Mammary epithelial cell (primary cell): ENCODE measurements at regions of chr10 and their contacts with region 1.

Region 1: DNA sequence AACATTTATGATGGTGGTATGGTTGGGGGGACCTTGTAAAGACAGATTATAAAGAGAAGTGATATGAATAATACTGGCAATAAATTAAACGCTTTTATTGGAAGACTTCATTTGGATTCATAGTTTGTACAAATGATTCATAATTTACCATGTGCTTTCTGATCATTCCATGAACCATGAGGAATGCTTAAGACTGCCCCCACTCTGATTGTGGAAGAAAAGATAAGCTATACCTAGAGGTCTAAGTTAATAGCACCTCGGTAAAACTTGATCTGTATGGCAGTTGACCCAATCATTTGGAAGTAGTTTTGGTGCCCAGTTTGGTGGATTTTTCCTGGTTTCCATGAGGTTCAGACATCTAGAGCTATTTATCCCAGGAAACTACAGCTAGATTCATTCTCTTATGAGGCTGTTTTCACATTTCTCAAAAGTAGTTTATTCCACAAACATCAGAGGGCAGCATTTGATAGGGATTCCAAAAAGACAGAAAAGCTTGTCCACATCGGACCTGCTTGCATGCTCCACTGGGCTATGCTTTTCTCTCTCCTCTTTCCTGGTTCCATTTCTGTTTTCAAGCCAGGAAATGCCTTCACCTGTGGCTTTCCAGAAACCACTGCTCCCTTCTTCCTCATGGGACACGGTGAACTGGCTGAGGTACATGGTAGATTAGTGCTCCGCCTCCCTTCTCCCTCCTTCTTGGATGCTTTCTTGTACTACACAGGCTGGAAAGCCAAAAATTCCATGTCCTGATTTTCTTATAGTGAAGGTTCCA is 29.2 kb downstream of the TFAM start:
- DNase-seq: peak; percentile 64
- H3K4me3 ChIP-seq: no peak overlapping the region
- H3K27ac ChIP-seq: no peak overlapping the region
- H3K4me1 ChIP-seq: peaks cover 10% of the 10 kb centered on the region
- H3K27me3 ChIP-seq: no peaks in the 10 kb centered on the region
- CTCF ChIP-seq: peak; percentile 35 to 62

Region 2: DNA sequence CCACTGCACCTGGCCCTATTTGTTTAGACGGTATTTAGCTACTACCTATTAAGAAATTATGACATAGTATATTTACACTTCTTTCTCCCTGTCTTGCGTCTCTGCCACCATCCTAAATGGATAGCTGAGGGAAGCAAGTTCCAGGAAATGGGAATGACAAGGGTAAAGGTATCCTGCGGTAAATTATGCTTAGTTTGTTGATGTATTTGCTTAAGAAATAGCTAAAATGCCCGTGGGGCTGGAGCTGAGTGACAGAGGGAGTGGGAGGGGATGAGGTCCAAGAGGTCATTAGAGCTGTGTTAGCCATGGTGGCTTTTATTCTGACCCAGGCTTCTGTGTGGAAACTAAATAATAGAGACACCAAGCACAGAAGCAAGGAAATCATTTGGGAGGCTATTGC is 108.6 kb before region 1 on chr10:
- CTCF ChIA-PET with region 1: no interaction called
- dilution Hi-C with region 1: no loop called
- in situ Hi-C with region 1: no loop called
- intact Hi-C with region 1: no loop called
- DNase-seq: no peak
- H3K4me3 ChIP-seq: no peak overlapping the region
- H3K27ac ChIP-seq: no peak overlapping the region
- H3K4me1 ChIP-seq: no peaks in the 10 kb centered on the region
- H3K27me3 ChIP-seq: peaks cover 2% of the 10 kb centered on the region
- CTCF ChIP-seq: no peak

Region 3: GRCh38 chr10:58435297-58435985 is 21.0 kb after region 1 on chr10:
- CTCF ChIA-PET with region 1: interaction called, 11 read pairs
- dilution Hi-C with region 1: no loop called
- in situ Hi-C with region 1: no loop called
- intact Hi-C with region 1: no loop called
- DNase-seq: peak; percentile 91
- H3K4me3 ChIP-seq: no peak overlapping the region
- H3K27ac ChIP-seq: peak overlapping the region; percentile 75
- H3K4me1 ChIP-seq: peaks cover 50% of the 10 kb centered on the region
- H3K27me3 ChIP-seq: no peaks in the 10 kb centered on the region
- CTCF ChIP-seq: peak; percentile 14 to 30

Region 4: GRCh38 chr10:58513188-58514110 is 99.0 kb after region 1 on chr10:
- CTCF ChIA-PET with region 1: interaction called, 3 read pairs
- dilution Hi-C with region 1: no loop called
- in situ Hi-C with region 1: loop called in 1 of 2 experiments (anchors 10 kb)
- intact Hi-C with region 1: loop called (anchors 1 kb)
- DNase-seq: peak; percentile 62
- H3K4me3 ChIP-seq: peak overlapping the region; percentile 84 to 95 (median 90)
- H3K27ac ChIP-seq: peak overlapping the region; percentile 72
- H3K4me1 ChIP-seq: peaks cover 22% of the 10 kb centered on the region
- H3K27me3 ChIP-seq: no peaks in the 10 kb centered on the region
- CTCF ChIP-seq: no peak

Region 5: DNA sequence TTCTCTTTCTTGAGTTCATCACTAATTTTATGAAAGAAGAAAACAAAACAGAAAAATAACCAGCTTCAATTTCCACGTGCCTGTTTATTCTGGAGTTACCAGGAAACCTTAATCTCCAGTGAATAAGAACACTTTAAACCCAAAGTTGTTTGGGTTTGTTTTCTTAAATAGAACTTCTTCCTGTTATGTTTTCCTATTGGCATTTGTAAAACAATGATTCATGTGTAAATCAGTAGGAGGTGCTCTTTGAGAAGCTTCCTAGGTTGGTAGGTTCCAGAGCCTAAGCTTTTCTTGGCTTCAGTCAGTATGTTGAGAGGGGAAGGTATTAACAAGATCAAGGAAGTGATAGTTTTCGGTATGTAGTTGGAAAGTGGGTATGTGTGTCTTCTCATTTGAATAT is 217.3 kb after region 1 on chr10:
- CTCF ChIA-PET with region 1: no interaction called
- dilution Hi-C with region 1: no loop called
- in situ Hi-C with region 1: no loop called
- intact Hi-C with region 1: loop called (anchors 2 kb)
- DNase-seq: no peak
- H3K4me3 ChIP-seq: no peak overlapping the region
- H3K27ac ChIP-seq: no peak overlapping the region
- H3K4me1 ChIP-seq: no peaks in the 10 kb centered on the region
- H3K27me3 ChIP-seq: no peaks in the 10 kb centered on the region
- CTCF ChIP-seq: no peak

Region 6: DNA sequence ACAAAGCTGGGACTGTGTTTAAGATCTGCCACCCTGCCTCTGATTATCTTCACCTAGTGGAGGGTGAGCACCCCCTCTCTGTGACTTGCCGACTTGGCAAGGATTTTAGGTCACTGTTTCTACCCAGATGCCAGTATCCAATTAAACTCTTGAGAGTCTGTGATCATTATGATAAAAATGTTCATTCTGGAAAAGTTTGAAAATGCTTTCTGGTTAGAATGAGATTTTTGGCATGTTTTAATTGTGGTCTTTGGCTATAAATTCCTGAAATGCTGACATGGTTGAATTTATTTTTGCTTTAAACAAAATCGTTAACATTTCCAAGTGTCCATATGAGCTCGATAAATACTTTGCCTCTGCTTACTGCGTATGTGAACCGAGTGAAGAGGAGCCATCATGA is 319.7 kb after region 1 on chr10:
- CTCF ChIA-PET with region 1: no interaction called
- dilution Hi-C with region 1: no loop called
- in situ Hi-C with region 1: no loop called
- intact Hi-C with region 1: no loop called
- DNase-seq: no peak
- H3K4me3 ChIP-seq: no peak overlapping the region
- H3K27ac ChIP-seq: no peak overlapping the region
- H3K4me1 ChIP-seq: no peaks in the 10 kb centered on the region
- H3K27me3 ChIP-seq: no peaks in the 10 kb centered on the region
- CTCF ChIP-seq: no peak

Region 7: DNA sequence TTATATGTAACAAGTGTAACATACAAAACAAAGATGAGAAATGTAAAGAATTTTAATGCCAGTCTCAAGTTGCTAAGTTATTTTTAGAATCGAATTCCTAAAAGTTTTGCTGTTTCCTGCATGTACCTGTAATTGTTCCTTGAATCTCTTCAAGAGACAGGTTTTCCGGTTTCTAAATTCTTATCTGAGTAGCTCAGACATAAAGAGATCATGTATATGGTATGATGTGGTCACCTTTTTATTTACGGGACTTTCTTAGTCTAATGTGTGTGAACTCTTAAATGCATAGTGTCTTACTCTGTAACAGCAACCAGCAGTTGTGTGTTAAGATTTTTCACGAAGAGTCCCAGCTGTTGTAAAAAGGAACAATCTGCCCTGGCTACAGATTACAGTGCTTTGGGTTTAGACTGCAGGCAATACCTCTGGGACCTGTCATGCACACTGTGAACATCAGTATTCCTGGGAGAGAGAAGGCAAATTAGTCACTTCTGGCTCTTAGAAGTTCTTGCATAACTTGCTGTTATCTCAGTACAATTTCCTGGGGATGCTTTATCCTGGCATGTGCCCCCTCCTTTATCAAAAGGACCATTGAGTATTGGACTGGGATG is 361.6 kb after region 1 on chr10:
- CTCF ChIA-PET with region 1: interaction called, 4 read pairs
- dilution Hi-C with region 1: no loop called
- in situ Hi-C with region 1: loop called in 1 of 2 experiments (anchors 25 kb)
- intact Hi-C with region 1: loop called (anchors 2 kb)
- DNase-seq: peak; percentile 71
- H3K4me3 ChIP-seq: no peak overlapping the region
- H3K27ac ChIP-seq: no peak overlapping the region
- H3K4me1 ChIP-seq: peaks cover 4% of the 10 kb centered on the region
- H3K27me3 ChIP-seq: no peaks in the 10 kb centered on the region
- CTCF ChIP-seq: no peak

Region 8: DNA sequence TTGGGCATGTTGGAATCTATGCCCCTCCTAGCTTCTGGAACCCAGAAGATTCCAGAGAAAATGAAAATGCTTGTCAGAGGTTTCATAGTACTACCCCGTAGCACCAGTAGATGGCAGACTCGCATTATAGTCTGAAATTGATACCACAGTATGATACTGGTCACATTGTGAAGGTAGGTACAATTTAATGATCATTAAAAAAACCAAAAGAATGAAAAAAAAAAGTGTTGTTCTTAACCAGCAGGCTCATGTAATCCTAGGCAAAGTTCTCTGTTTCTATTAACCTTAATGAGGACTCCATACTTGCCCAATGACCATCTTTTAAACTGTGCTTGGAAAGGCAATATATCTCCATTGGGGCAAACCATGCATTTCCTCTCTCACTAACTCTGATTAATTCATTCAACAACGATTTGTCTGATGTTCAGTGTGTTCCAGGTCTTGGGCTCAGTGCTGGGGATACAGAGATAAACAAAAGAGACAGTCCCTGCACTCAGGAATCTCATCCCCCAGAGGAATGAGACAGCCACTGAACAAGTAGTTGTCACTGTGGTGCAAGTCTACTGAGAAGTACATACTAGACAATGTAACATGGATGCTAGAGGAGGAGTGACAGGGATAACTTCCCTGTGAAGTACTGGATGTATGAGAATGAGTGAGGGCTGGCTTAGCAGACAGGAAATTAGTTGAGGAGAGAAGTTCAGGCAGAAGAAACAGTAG is 538.5 kb after region 1 on chr10:
- CTCF ChIA-PET with region 1: no interaction called
- dilution Hi-C with region 1: no loop called
- in situ Hi-C with region 1: loop called in 1 of 2 experiments (anchors 25 kb)
- intact Hi-C with region 1: loop called (anchors 1 kb)
- DNase-seq: peak; percentile 35
- H3K4me3 ChIP-seq: no peak overlapping the region
- H3K27ac ChIP-seq: no peak overlapping the region
- H3K4me1 ChIP-seq: peaks cover 21% of the 10 kb centered on the region
- H3K27me3 ChIP-seq: no peaks in the 10 kb centered on the region
- CTCF ChIP-seq: peak; percentile 84

Region 9: GRCh38 chr10:59234816-59235429 is 820.5 kb after region 1 on chr10:
- CTCF ChIA-PET with region 1: no interaction called
- dilution Hi-C with region 1: no loop called
- in situ Hi-C with region 1: no loop called
- intact Hi-C with region 1: loop called (anchors 5 kb)
- DNase-seq: peak; percentile 12
- H3K4me3 ChIP-seq: no peak overlapping the region
- H3K27ac ChIP-seq: no peak overlapping the region
- H3K4me1 ChIP-seq: no peaks in the 10 kb centered on the region
- H3K27me3 ChIP-seq: no peaks in the 10 kb centered on the region
- CTCF ChIP-seq: peak; percentile 56 to 72